ENCODE measurements at regions of chr18 and their contacts with region 1.

Region 1: GRCh38 chr18:61502472-61502871 is 169.2 kb downstream of the CDH20 start:
- DNase-seq: no peak
- ATAC-seq: peak; percentile 61 to 64

Region 2: GRCh38 chr18:59988098-59988706 is 1514.3 kb before region 1 on chr18:
- intact Hi-C with region 1: loop called in 1 of 2 experiments (anchors 5 kb)
- DNase-seq: peak; percentile 39
- ATAC-seq: no peak

Region 3: GRCh38 chr18:60684843-60685513 is 817.5 kb before region 1 on chr18:
- intact Hi-C with region 1: loop called (anchors 2 to 5 kb)
- DNase-seq: no peak
- ATAC-seq: no peak

Region 4: DNA sequence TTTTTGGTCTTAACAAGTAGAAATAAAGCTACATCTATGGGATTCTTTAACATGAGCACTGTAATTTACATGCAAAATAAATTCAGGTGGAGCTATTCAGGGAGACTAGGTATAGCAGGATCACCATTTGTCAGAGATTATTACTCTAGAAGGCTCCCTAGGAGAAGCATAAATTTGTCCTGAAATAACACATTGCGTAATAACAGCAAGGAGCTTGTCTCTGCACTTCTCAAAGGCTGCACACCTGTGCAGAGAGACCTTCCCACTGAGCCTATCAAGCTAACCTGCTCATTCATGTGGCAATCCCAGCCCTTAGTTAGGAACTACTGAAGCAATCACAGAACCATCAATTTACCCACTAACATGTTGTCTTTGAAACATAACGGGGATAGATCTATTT is 692.5 kb before region 1 on chr18:
- intact Hi-C with region 1: loop called in 1 of 2 experiments (anchors 5 kb)
- DNase-seq: no peak
- ATAC-seq: no peak

Region 5: GRCh38 chr18:61085761-61086160 is 416.7 kb before region 1 on chr18:
- intact Hi-C with region 1: loop called in 1 of 2 experiments (anchors 5 kb)
- DNase-seq: no peak
- ATAC-seq: no peak

Region 6: DNA sequence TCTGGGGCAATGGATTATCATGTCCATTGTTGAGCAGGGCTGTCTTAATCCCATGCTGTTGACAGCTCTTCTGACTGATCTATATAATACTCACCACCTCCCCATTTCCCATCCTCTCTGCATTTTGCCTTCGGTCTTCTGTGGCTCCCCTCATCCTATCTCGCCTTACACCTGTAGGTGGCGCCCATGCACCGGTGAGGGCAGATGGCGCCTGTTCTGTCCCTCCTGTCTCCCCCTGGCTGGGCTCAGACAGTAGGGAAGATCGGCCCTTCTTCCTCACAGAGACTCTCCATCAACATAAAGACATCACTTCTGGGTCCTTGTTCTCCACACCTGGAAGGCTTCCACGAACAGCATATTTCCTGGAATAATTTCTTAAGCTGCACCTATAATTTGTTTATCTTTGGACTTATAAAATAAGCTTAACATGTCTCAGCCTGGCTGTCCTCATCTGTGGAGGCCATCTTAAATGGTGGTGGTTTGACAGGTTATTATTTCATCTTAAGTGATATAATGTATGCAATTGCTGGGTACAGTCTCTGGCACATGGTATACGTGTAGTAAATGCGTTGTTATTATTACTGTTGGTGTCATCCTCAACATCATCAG is 180.1 kb before region 1 on chr18:
- intact Hi-C with region 1: loop called (anchors 5 kb)
- DNase-seq: peak; percentile 43
- ATAC-seq: peak; percentile 71 to 78

Region 7: DNA sequence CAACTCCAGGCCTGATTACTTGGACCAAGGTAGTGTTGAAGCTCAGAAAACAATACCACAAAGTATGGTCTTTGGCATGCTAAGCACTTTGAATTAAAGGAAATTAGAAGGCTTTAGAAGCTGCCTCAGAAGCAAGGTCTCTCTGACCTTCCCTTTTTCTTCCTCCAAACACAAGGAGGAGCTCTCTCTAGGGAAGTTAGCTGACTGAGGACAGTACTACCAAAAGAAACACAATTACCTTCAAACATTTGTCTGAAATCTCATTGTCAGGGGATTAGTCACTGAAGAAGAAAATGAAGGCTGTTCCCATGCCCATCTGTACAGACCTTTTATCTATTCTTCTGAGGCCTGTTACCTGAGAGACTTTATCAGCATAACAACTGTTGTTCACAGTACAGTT is 110.0 kb after region 1 on chr18:
- intact Hi-C with region 1: no loop called
- DNase-seq: no peak
- ATAC-seq: no peak

Measured in left cardiac atrium (tissue), 4 donors.